Caco-2 (cell line): ENCODE measurements at regions of chr4 and their contacts with region 1.

Region 1: GRCh38 chr4:174437324-174437723 is 85.0 kb downstream of the HPGD start:
- DNase-seq: no peak
- H3K4me3 ChIP-seq: no peak overlapping the region
- H3K4me3 Mint-ChIP-seq: no peak overlapping the region
- H3K27ac Mint-ChIP-seq: no peak overlapping the region
- H3K4me1 ChIP-seq: no peaks in the 10 kb centered on the region
- H3K4me1 Mint-ChIP-seq: peaks cover 8% of the 10 kb centered on the region
- H3K27me3 ChIP-seq: no peaks in the 10 kb centered on the region
- H3K27me3 Mint-ChIP-seq: no peaks in the 10 kb centered on the region
- CTCF ChIP-seq: no peak

Region 2: DNA sequence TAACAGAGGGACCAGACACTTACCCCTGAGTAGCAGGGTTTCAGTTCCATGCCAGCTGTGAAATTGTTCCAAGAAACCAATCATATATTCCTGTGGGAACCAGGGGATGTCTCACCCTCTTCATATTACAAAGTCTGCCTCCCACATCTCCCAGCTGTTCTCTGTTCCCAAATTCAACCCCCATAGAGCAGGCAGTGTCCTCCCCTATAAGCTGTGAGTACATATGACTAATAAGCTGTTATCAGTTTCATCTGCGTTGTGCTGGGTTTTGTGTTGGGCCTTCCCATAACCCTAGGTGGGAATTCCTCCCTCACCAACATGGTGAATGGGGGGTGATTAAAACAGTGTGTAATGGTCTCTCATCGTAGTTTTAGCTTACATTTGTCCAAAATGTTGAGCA is 112.6 kb before region 1 on chr4:
- CTCF ChIA-PET with region 1: no interaction called
- POLR2A ChIA-PET with region 1: no interaction called
- intact Hi-C with region 1: no loop called
- DNase-seq: no peak
- H3K4me3 ChIP-seq: no peak overlapping the region
- H3K4me3 Mint-ChIP-seq: no peak overlapping the region
- H3K27ac Mint-ChIP-seq: no peak overlapping the region
- H3K4me1 ChIP-seq: no peaks in the 10 kb centered on the region
- H3K4me1 Mint-ChIP-seq: no peaks in the 10 kb centered on the region
- H3K27me3 ChIP-seq: no peaks in the 10 kb centered on the region
- H3K27me3 Mint-ChIP-seq: no peaks in the 10 kb centered on the region
- CTCF ChIP-seq: no peak

Region 3: GRCh38 chr4:174474462-174475189 is 37.3 kb after region 1 on chr4:
- CTCF ChIA-PET with region 1: no interaction called
- POLR2A ChIA-PET with region 1: no interaction called
- intact Hi-C with region 1: loop called (anchors 1 kb)
- DNase-seq: peak in 1 of 2 experiments; percentile 35
- H3K4me3 ChIP-seq: no peak overlapping the region
- H3K4me3 Mint-ChIP-seq: no peak overlapping the region
- H3K27ac Mint-ChIP-seq: no peak overlapping the region
- H3K4me1 ChIP-seq: no peaks in the 10 kb centered on the region
- H3K4me1 Mint-ChIP-seq: peaks cover 4% of the 10 kb centered on the region
- H3K27me3 ChIP-seq: no peaks in the 10 kb centered on the region
- H3K27me3 Mint-ChIP-seq: no peaks in the 10 kb centered on the region
- CTCF ChIP-seq: no peak